ENCODE measurements at regions of chr1 and their contacts with region 1.

Region 1: GRCh38 chr1:27481994-27482620 is 7.9 kb downstream of the WASF2 start:
- DNase-seq: no peak
- ATAC-seq: no peak
- H3K4me3 ChIP-seq: no peak overlapping the region
- H3K27ac ChIP-seq: no peak overlapping the region
- H3K4me1 ChIP-seq: peaks cover 53% of the 10 kb centered on the region
- H3K27me3 ChIP-seq: no peaks in the 10 kb centered on the region
- CTCF ChIP-seq: no peak

Region 2: GRCh38 chr1:27428316-27429028 is 53.6 kb before region 1 on chr1:
- intact Hi-C with region 1: loop called in 1 of 2 experiments (anchors 5 kb)
- DNase-seq: peak; percentile 33 to 74
- ATAC-seq: peak; percentile 89 to 95 (median 93)
- H3K4me3 ChIP-seq: peak overlapping the region; percentile 35
- H3K27ac ChIP-seq: peak overlapping the region; percentile 79
- H3K4me1 ChIP-seq: peaks cover 71% of the 10 kb centered on the region
- H3K27me3 ChIP-seq: no peaks in the 10 kb centered on the region
- CTCF ChIP-seq: no peak

Region 3: DNA sequence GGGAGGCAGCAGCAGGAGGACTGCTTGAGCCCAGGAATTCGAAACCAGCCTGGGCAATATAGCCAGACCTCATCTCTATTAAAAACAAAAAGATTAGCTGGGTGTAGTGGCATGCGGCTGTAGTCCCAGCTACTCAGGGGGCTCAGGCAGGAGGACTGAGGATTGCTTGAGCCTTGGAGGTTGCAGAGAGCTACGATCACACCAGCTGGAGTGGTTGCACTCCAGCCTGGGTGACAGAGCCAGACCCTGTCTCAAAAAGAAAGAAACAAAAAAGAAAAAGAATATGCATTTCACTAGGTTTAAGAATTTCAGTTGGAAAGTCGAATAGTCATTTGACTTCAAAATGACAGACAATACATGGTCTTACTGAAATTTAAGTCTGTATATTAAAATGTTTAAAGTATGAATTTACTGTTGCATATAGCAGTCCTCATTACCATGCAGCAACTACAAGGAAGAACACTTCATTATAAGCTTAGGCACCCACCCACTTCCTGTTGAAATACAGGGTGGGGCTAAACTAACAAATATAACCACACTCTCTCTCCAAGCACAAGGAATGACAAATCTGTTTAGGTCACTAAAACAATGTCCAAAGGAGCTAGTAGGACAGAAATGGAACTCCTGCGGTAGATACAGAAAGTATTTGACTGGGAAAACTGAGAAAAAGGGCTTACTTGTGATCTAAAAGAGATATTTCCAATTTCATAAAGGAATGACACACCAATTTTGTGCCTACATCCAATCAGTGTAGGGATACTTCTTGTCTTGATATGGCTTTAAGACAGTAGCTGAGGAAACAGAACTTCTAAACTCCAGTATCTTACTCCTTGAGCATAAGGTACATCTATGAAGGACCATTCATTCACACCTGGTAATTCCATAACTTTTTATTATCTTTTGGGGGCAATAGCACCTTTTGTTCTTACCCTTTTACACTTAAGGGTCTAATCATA is 45.6 kb before region 1 on chr1:
- intact Hi-C with region 1: loop called in 1 of 2 experiments (anchors 5 kb)
- DNase-seq: no peak
- ATAC-seq: peak; percentile 40 to 78 (median 68)
- H3K4me3 ChIP-seq: no peak overlapping the region
- H3K27ac ChIP-seq: peak overlapping the region; percentile 59
- H3K4me1 ChIP-seq: peaks cover 72% of the 10 kb centered on the region
- H3K27me3 ChIP-seq: no peaks in the 10 kb centered on the region
- CTCF ChIP-seq: no peak